ENCODE measurements at regions of chr2 and their contacts with region 1.

Region 1: GRCh38 chr2:27143285-27143684 is 4.1 kb upstream of the PRR30 start:
- DNase-seq: no peak
- ATAC-seq: no peak
- H3K4me3 ChIP-seq: no peak overlapping the region
- H3K27ac ChIP-seq: no peak overlapping the region
- H3K4me1 ChIP-seq: no peaks in the 10 kb centered on the region
- H3K27me3 ChIP-seq: no peaks in the 10 kb centered on the region
- CTCF ChIP-seq: no peak

Region 2: DNA sequence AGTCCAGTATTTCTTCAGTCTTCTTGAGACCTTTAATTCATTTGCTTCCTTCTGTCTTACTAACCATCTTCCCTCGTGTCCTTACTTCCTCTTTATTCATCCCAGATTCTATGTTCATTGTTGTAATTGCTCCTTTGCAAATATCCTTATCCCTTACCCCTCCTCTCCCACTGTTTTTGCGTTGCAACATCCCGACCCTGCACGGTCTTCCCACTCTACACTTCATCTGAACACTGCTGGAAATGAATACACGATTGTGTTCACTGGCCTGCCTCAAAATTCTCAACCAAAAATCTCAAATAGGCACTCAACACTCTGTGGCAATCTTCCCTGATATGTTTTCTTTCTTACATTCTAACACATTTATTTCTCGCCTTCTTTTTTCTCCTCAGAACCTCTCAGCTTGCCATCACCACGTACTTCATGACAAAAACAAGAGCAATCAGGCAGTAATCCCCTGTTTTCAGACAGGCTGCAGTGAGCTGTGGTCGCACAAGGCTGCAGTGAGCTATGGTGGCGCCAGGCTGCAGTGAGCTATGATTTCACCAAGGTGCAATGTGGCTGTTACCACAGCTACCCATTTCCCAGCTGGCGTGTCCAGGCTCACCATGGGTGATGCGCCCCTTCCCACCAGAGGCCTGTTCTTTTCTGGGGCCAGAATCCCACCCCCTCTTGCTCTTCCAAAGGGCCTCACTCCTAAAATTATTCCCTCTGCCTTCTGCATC is 31.2 kb after region 1 on chr2:
- intact Hi-C with region 1: loop called in 1 of 2 experiments (anchors 5 kb)
- DNase-seq: no peak
- ATAC-seq: no peak
- H3K4me3 ChIP-seq: no peak overlapping the region
- H3K27ac ChIP-seq: no peak overlapping the region
- H3K4me1 ChIP-seq: no peaks in the 10 kb centered on the region
- H3K27me3 ChIP-seq: peaks cover 0 to 12% (median 0%) of the 10 kb centered on the region in 3 donors
- CTCF ChIP-seq: no peak

Region 3: GRCh38 chr2:27335311-27335710 is 192.0 kb after region 1 on chr2:
- intact Hi-C with region 1: no loop called
- DNase-seq: no peak
- ATAC-seq: no peak
- H3K4me3 ChIP-seq: no peak overlapping the region
- H3K27ac ChIP-seq: no peak overlapping the region
- H3K4me1 ChIP-seq: no peaks in the 10 kb centered on the region
- H3K27me3 ChIP-seq: no peaks in the 10 kb centered on the region
- CTCF ChIP-seq: no peak

Measured in psoas muscle (tissue), 8 donors.